PC-9 (cell line): ENCODE measurements at regions of chr3 and their contacts with region 1.

Region 1: DNA sequence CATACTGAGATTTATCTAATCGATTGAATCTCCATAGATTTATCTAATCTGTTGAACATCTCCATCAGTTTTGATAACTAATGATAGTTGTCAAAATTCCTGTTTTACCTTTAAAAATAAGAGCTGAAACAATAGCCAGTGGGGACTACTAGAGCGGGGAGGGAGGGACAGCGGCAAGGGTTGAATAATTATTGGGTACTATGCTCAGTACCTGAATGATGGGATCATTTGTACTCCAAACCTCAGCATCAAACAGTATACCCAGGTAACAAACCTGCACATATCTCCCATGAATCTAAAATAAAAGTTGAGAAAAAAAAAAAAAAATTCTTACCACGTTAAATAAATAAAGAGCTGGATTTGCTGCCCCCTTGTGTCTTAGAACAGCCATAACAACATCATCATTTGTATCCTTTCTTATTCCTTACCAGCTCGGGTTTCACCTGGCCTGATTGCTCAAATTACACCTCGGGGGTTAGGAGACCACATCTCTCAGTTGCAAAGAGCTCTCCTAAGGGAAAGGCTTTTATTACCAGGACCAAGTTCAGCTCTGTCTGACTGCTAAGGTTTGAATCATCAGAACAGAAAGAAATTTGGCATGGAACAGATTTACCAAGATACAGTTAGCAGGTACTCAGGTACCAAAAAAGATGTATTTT is 25.7 kb upstream of the RPL39L start:
- DNase-seq: peak; percentile 71 to 91
- H3K4me3 ChIP-seq: no peak overlapping the region
- H3K27ac ChIP-seq: no peak overlapping the region
- H3K4me1 ChIP-seq: peaks cover 23% of the 10 kb centered on the region
- H3K27me3 ChIP-seq: no peaks in the 10 kb centered on the region
- CTCF ChIP-seq: peak; percentile 94

Region 2: DNA sequence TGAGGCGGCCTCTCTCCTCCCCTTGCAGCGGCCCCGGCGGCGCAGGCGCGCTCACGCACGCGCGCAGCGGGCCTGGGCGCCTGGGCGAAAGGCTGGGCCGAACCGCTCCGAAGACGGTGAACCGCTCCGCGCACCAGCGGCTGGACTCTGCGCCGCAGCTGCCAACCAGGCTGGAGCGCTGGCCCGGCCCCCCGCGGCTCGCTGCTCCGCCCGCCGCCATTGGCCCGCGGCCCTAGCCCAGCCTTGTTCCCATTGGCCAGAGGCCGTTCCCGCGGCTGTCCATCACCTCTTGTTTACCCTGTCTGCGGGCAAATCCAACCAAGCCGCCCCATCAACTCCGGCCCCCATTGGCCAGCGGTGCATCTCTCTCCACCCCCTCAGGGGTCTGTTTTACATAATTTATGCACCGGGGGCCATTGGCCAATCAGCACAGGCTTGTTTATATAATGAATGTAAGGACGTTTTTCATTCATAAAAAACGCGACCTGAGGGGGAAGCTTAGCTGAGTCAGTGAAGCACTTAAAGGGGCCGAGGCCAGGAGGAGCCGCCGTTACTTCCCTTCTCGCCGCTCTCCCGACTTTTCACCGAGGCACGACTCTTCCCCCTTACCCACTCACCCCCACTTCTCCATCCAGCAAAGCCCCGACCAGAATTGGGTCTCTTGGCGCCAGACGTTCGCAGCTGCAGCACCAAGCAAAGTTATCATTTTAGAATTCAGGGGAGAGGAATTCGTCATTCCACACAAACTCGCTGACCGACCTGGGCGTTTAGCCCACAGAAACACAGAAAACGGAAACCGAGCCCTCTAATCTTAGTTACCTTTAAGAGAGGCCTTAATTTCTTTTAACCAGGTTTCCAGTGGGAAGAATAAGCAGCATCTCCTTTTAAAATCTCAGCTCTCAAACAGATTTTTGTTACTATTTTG is 1055.8 kb before region 1 on chr3 and contains the start of gene ETV5:
- CTCF ChIA-PET with region 1: interaction called, 12 read pairs
- POLR2A ChIA-PET with region 1: no interaction called
- intact Hi-C with region 1: no loop called
- DNase-seq: peak; percentile 100
- H3K4me3 ChIP-seq: peak within 1 kb of the TSS; percentile 87
- H3K27ac ChIP-seq: peak within 1 kb of the TSS; percentile 80
- H3K4me1 ChIP-seq: peaks cover 40% of the 10 kb centered on the region
- H3K27me3 ChIP-seq: no peaks in the 10 kb centered on the region
- CTCF ChIP-seq: no peak
- total RNA-seq, gene ETV5: 39.3 and 65.7 TPM in 2 replicates

Region 3: GRCh38 chr3:186849374-186849975 is 315.5 kb before region 1 on chr3:
- CTCF ChIA-PET with region 1: interaction called, 19 read pairs
- POLR2A ChIA-PET with region 1: no interaction called
- intact Hi-C with region 1: loop called (anchors 1 kb)
- DNase-seq: peak in 1 of 2 experiments; percentile 52
- H3K4me3 ChIP-seq: no peak overlapping the region
- H3K27ac ChIP-seq: no peak overlapping the region
- H3K4me1 ChIP-seq: no peaks in the 10 kb centered on the region
- H3K27me3 ChIP-seq: 0 out of 2 replicates have a peak, but pooled peaks cover 7% of the 10 kb centered on the region
- CTCF ChIP-seq: peak; percentile 81

Region 4: GRCh38 chr3:187066228-187066995 is 98.6 kb before region 1 on chr3:
- CTCF ChIA-PET with region 1: interaction called, 4 read pairs
- POLR2A ChIA-PET with region 1: no interaction called
- intact Hi-C with region 1: loop called (anchors 2 kb)
- DNase-seq: peak; percentile 23 to 60
- H3K4me3 ChIP-seq: no peak overlapping the region
- H3K27ac ChIP-seq: no peak overlapping the region
- H3K4me1 ChIP-seq: peaks cover 49% of the 10 kb centered on the region
- H3K27me3 ChIP-seq: no peaks in the 10 kb centered on the region
- CTCF ChIP-seq: peak; percentile 42; the same call in 1 of the 2 replicates

Region 5: DNA sequence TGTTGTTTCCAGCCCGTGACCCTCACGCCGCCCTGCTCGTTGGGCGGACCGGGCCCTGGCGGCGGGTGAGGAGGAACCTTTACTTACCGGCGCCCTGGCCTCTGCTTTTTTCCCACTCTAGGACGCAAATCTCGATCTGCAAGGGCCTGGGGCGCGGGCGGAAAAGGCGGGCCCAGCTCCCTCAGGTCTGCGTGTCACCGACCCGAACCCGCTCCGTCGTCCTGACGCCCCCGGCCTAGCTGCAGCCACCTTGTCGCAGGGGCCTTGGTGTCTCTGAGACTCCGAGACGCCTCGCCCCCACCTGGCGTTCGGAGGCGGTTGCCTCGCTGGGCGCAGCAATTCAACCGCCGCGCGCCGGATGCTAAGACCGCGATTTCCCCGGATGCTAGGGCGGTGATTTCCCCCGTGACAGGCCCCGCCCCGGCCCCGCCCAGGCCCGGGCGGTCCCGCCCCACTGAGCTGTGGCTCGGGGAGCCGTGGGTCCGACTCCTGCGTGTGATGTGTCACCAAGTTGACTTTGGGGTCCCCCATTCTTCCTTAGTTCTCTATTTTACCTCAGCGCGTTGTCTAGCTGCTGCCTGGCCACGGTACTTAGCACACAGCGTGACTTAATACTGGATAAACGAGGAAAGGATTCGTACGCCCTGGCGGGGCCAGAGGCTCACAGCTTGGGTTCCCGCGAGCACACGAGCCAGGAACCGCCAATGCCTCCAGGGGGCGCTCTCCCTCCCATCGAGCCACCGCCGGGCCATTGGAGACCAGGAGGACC is 25.7 kb before region 1 on chr3 and contains the start of gene RPL39L:
- CTCF ChIA-PET with region 1: interaction called, 29 read pairs
- POLR2A ChIA-PET with region 1: interaction called, 12 read pairs
- intact Hi-C with region 1: loop called (anchors 2 kb)
- DNase-seq: peak; percentile 83 to 92
- H3K4me3 ChIP-seq: peak within 1 kb of the TSS; percentile 73
- H3K27ac ChIP-seq: peak within 1 kb of the TSS; percentile 57
- H3K4me1 ChIP-seq: peaks cover 22% of the 10 kb centered on the region
- H3K27me3 ChIP-seq: no peaks in the 10 kb centered on the region
- CTCF ChIP-seq: peak; percentile 99
- total RNA-seq, gene RPL39L: 73.9 and 81.3 TPM in 2 replicates

Region 6: DNA sequence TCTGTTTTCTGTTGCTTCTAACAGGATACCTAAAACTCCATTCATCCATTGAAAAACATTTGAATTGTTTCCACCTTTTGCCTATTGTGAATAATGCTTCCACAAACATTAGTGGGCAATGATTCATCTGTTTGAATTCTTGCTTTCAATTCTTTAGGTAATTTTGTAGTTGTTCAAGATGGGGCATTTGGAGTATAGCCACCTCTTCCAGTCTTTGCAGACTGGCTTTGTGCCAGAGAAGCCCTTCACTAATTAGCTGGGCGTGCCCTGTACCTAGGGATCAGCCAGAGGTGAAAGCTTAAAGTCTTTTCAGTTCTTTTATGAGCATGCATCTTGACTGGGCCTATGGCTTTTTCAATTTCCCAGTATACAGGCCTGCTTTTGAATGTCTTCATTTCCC is 43.1 kb after region 1 on chr3:
- CTCF ChIA-PET with region 1: interaction called, 13 read pairs
- POLR2A ChIA-PET with region 1: no interaction called
- intact Hi-C with region 1: no loop called
- DNase-seq: peak; percentile 73 to 86
- H3K4me3 ChIP-seq: no peak overlapping the region
- H3K27ac ChIP-seq: no peak overlapping the region
- H3K4me1 ChIP-seq: peaks cover 24% of the 10 kb centered on the region
- H3K27me3 ChIP-seq: no peaks in the 10 kb centered on the region
- CTCF ChIP-seq: no peak

Region 7: GRCh38 chr3:187291001-187291511 is 126.0 kb after region 1 on chr3:
- CTCF ChIA-PET with region 1: no interaction called
- POLR2A ChIA-PET with region 1: no interaction called
- intact Hi-C with region 1: loop called (anchors 5 kb)
- DNase-seq: peak in 1 of 2 experiments; percentile 11
- H3K4me3 ChIP-seq: no peak overlapping the region
- H3K27ac ChIP-seq: no peak overlapping the region
- H3K4me1 ChIP-seq: peaks cover 7% of the 10 kb centered on the region; the same call in 1 of the 2 replicates
- H3K27me3 ChIP-seq: no peaks in the 10 kb centered on the region
- CTCF ChIP-seq: no peak